ENCODE measurements at regions of chr4 and their contacts with region 1.

Region 1: DNA sequence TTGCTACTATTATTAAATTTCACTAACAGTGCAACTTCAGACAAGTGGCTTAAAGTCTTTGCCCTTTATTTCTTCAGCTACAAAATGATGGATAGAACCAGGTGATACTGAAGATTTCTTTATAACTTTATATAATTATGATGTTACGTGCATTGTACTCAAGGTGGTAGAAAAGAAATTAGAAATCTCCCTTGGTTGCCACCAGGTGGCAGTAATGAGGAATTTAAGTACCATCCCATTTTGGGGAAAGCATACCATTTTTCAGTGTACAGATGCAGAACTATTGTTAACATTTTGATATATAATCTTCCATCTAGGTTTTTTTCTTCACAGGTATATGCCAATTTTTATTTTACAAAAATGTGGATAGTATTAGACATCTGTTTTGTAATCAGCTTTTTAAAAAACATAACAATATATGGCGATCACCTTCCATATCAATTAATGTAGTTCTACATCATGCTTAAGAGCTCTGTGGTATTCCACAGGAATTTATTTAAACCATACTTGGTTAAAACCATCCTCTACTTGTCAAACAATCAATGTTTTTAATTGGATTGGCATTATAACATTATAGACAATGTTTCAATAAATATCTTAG is 37.7 kb upstream of the RAB33B start:
- DNase-seq: no peak
- ATAC-seq: no peak
- H3K4me3 ChIP-seq: no peak overlapping the region
- H3K27ac ChIP-seq: no peak overlapping the region
- H3K4me1 ChIP-seq: no peaks in the 10 kb centered on the region
- H3K27me3 ChIP-seq: no peaks in the 10 kb centered on the region
- CTCF ChIP-seq: peak; percentile 51 to 76 (median 57)
- POLR2A ChIP-seq: no peak

Region 2: GRCh38 chr4:139461022-139461628 is 45.0 kb after region 1 on chr4:
- in situ Hi-C with region 1: loop called in 1 of 4 experiments (anchors 10 kb)
- intact Hi-C with region 1: no loop called
- DNase-seq: no peak
- ATAC-seq: no peak
- H3K4me3 ChIP-seq: no peak overlapping the region
- H3K27ac ChIP-seq: no peak overlapping the region
- H3K4me1 ChIP-seq: peaks cover 11 to 16% of the 10 kb centered on the region in 2 donors
- H3K27me3 ChIP-seq: no peaks in the 10 kb centered on the region
- CTCF ChIP-seq: no peak
- POLR2A ChIP-seq: no peak

Region 3: DNA sequence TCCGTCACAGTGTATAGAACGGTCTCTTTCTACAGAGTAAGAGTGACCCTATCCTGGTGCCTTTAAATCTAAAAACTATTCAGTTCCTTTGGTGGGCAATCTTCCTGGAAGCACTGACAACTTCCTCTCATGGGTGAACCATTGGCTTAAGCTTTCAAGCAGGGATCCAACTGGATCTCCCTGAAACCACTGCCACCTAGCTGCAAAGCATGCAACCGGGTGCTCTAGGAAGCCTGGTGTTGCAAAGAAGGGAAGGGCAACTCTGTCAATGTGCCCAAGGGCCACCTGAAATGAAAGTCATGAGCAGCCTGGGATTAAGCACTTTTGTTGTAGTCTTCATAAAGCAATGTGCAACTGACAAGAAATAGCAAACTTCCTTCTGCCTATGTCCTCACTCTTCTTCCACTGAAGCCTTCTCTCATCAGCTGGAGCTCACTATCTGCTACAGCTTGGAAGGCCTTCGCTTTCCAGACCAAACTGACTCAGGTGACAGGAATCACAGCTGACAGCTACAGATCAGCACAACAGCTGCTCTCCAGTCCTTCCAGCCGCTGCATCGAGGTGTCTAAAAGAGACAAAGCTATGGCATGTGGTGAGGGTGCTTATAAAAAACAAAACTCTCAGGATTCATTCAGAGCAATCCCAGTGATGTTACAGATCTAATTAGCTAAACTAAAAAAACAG is 93.7 kb after region 1 on chr4:
- in situ Hi-C with region 1: no loop called
- intact Hi-C with region 1: loop called (anchors 5 kb)
- DNase-seq: no peak
- ATAC-seq: peak; percentile 36 to 69
- H3K4me3 ChIP-seq: no peak overlapping the region
- H3K27ac ChIP-seq: peak overlapping the region; percentile 63 to 83 (median 74)
- H3K4me1 ChIP-seq: peaks cover 48 to 55% of the 10 kb centered on the region in 2 donors
- H3K27me3 ChIP-seq: no peaks in the 10 kb centered on the region
- CTCF ChIP-seq: peak in 4 of 5 experiments; percentile 28 to 59 (median 42)
- POLR2A ChIP-seq: no peak

Region 4: GRCh38 chr4:139547979-139548378 is 131.8 kb after region 1 on chr4:
- in situ Hi-C with region 1: no loop called
- intact Hi-C with region 1: no loop called
- DNase-seq: no peak
- ATAC-seq: no peak
- H3K4me3 ChIP-seq: no peak overlapping the region
- H3K27ac ChIP-seq: no peak overlapping the region
- H3K4me1 ChIP-seq: peaks cover 56 to 64% of the 10 kb centered on the region in 2 donors
- H3K27me3 ChIP-seq: no peaks in the 10 kb centered on the region
- CTCF ChIP-seq: no peak
- POLR2A ChIP-seq: no peak

Region 5: DNA sequence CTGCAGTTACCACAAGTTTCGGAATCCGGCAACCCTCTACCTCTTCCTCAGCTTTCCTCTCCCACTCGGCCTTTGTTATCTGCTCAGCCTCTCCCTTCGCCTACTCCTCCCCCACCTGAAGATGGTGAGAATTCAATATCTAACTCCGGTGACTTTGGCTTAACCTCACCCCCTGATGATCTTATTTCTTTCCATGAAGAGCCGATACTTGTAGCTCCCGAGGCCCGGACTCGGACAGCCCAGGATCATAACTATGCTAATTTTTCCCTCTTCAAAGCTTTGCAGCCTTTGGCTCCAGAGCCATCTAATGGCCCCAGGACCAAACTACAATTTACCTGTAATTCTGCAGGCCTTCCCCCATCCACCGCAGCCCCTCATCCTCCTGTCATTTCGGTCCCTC is 217.5 kb after region 1 on chr4:
- in situ Hi-C with region 1: no loop called
- intact Hi-C with region 1: loop called (anchors 5 kb)
- DNase-seq: no peak
- ATAC-seq: peak; percentile 75 to 79
- H3K4me3 ChIP-seq: peak overlapping the region in 2 of 4 donors; percentile 22
- H3K27ac ChIP-seq: no peak overlapping the region
- H3K4me1 ChIP-seq: peaks cover 0 to 6% of the 10 kb centered on the region in 2 donors
- H3K27me3 ChIP-seq: no peaks in the 10 kb centered on the region
- CTCF ChIP-seq: peak in 4 of 5 experiments; percentile 20 to 46 (median 42)
- POLR2A ChIP-seq: no peak